Activated CD4-positive, alpha-beta T cell treated with anti-CD3 and anti-CD28 coated beads for 36 hours (primary cell): ENCODE measurements at regions of chr14 and their contacts with region 1.

Region 1: GRCh38 chr14:105490572-105491366 is at the start of gene TEDC1:
- DNase-seq: peak; percentile 100
- ATAC-seq: peak; percentile 80
- H3K4me3 Mint-ChIP-seq: peak within 1 kb of the TSS; percentile 81
- H3K27ac Mint-ChIP-seq: peak within 1 kb of the TSS; percentile 86
- H3K4me1 Mint-ChIP-seq: peaks cover 22% of the 10 kb centered on the region
- H3K27me3 Mint-ChIP-seq: no peaks in the 10 kb centered on the region
- total RNA-seq, gene TEDC1: 21.7 to 31.8 TPM

Region 2: DNA sequence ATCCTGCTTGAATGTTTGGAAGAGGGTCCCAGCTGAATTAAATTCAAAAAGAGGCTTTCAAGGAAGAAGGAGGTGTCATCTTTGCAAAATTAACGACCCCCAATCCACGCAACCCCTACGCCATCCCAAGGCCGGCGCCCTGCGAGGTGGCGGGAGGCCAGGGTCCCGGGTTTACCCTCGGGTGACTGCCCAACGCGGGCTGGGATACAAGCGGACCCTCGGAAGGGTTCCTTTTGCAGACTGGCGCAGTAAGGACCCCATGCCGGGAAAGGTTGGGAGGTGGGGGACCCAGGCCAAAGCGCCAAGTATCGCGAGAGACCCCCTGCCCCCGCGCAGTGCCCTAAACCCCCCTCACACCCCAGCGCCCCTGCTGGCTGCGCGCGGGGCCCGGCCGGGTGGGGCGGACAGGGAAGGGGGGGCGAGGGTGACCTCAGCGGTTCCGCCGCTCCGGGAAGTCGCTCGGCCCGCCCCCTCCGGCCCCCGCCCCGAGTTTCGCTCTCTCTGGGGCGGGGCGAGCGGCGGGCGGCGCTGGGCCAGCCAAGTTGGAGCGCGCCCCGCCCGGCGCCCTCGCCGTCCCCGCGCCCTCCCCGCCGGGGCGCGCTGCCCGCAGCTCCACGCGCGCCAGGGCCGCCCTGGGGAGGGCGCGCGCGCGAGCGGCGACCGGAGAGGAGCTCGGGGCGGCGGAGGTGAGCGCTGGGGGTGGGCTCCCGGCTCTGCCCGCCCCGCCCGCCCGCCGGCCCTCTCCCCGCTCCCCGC is 690.6 kb before region 1 on chr14:
- CTCF ChIA-PET with region 1: no interaction called
- POLR2A ChIA-PET with region 1: no interaction called
- intact Hi-C with region 1: loop called in 1 of 2 experiments (anchors 2 kb)
- DNase-seq: peak; percentile 88
- ATAC-seq: peak; percentile 77
- H3K4me3 Mint-ChIP-seq: peak overlapping the region; percentile 49
- H3K27ac Mint-ChIP-seq: no peak overlapping the region
- H3K4me1 Mint-ChIP-seq: peaks cover 22% of the 10 kb centered on the region
- H3K27me3 Mint-ChIP-seq: no peaks in the 10 kb centered on the region

Region 3: DNA sequence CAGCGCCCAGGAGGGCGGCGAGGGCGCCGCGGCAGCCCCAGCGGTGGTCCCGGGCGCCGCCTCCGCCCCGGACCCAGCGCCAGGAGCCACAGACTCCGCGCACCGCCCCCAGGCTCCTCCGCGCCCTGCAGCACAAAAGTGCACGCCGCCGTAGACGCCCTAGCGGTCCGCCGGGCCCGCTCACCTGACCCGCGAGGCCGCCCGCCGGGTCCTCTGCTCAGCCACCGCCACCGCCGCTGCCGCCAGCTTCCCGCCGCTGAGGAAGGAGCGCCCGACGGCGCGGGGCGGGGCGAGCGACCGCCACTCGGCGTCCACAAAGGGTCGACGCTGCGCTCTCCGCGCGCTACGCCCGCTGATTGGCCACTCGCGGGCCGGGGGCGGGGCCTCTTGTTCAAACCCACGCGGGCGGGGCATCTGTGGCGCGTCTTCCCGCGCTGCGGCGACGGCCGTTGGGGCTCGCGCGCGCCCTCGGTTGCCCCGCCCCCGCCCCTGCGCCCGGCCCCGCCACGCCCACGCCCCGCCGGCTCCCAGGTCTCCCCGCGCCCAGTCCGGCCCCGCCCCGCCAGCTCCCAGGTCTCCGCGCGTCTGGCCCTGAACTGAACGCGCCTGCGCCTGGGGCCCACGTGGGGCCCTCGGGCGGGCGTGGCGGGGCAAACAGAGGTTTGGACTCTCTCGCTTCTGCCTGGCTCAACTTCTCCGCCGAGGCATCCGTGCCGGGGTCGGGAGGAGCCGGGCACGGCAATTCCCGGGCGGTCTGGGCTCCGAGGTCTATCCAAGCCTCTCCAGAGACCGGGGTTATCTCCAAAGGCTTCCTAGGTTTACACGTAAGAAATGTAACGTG is 469.7 kb before region 1 on chr14 and contains the start of gene CDCA4:
- CTCF ChIA-PET with region 1: no interaction called
- POLR2A ChIA-PET with region 1: no interaction called
- intact Hi-C with region 1: loop called (anchors 1 kb)
- DNase-seq: peak; percentile 99
- ATAC-seq: peak; percentile 82
- H3K4me3 Mint-ChIP-seq: peak within 1 kb of the TSS; percentile 94
- H3K27ac Mint-ChIP-seq: peak within 1 kb of the TSS; percentile 93
- H3K4me1 Mint-ChIP-seq: peaks cover 72% of the 10 kb centered on the region
- H3K27me3 Mint-ChIP-seq: no peaks in the 10 kb centered on the region
- total RNA-seq, gene CDCA4: 52.0 to 62.7 TPM

Region 4: DNA sequence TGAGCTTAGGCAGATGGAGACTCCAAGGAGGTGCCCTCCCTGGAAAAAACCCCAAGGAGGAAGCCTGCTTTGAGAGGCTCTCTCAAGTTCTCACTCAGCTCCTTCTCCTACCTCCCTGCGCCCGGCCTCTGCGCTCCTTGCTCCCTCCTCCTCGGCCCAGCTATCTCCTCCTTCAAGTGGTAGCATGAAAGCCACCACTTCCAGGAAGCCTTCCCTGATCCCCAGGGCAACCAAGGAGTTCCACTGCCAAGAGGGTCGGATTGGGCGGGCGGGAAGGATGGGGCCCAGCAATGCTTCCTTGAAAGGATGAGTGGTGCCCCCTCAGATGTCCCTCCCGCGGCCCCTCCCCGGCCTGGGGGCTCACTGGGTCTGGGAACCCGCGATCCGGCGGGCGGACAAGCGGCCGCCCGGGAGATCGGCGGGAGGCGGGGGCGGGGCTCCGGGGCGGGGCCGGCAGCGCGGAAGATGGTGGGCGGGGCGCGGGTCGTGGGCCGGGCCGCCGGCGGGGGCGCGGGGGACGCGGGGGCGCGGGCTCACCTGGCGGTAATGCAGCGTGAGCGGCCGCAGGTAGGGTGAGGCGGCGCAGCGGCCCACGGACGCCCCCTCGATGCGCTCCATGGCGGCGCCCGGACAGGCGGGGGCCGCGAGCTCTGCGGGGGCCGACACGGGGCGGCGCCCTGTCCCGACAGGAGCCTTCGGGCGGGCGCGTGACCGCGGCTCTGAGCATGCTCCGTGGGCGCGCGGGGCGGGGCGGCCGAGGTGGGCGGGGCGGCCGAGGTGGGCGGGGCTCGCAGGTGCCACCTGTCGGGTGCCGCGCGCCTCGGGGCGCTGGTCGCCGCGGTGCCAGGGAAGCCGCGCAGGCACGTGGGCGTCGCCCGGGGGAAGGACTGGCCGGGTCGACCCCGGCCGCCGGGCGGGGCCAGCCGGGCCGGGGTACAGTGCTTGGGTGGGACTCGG is 309.9 kb before region 1 on chr14 and contains the start of gene NUDT14:
- CTCF ChIA-PET with region 1: no interaction called
- POLR2A ChIA-PET with region 1: no interaction called
- intact Hi-C with region 1: loop called in 1 of 2 experiments (anchors 1 kb)
- DNase-seq: peak; percentile 93
- ATAC-seq: peak; percentile 90
- H3K4me3 Mint-ChIP-seq: peak within 1 kb of the TSS; percentile 69
- H3K27ac Mint-ChIP-seq: no peak within 1 kb of the TSS
- H3K4me1 Mint-ChIP-seq: peaks cover 10% of the 10 kb centered on the region
- H3K27me3 Mint-ChIP-seq: no peaks in the 10 kb centered on the region
- total RNA-seq, gene NUDT14: 12.3 to 13.5 TPM

Region 5: GRCh38 chr14:105368965-105369652 is 121.7 kb before region 1 on chr14:
- CTCF ChIA-PET with region 1: interaction called, 74 read pairs
- POLR2A ChIA-PET with region 1: interaction called, 8 read pairs
- intact Hi-C with region 1: loop called (anchors 1 kb)
- DNase-seq: no peak
- ATAC-seq: no peak
- H3K4me3 Mint-ChIP-seq: no peak overlapping the region
- H3K27ac Mint-ChIP-seq: no peak overlapping the region
- H3K4me1 Mint-ChIP-seq: peaks cover 4% of the 10 kb centered on the region
- H3K27me3 Mint-ChIP-seq: no peaks in the 10 kb centered on the region

Region 6: DNA sequence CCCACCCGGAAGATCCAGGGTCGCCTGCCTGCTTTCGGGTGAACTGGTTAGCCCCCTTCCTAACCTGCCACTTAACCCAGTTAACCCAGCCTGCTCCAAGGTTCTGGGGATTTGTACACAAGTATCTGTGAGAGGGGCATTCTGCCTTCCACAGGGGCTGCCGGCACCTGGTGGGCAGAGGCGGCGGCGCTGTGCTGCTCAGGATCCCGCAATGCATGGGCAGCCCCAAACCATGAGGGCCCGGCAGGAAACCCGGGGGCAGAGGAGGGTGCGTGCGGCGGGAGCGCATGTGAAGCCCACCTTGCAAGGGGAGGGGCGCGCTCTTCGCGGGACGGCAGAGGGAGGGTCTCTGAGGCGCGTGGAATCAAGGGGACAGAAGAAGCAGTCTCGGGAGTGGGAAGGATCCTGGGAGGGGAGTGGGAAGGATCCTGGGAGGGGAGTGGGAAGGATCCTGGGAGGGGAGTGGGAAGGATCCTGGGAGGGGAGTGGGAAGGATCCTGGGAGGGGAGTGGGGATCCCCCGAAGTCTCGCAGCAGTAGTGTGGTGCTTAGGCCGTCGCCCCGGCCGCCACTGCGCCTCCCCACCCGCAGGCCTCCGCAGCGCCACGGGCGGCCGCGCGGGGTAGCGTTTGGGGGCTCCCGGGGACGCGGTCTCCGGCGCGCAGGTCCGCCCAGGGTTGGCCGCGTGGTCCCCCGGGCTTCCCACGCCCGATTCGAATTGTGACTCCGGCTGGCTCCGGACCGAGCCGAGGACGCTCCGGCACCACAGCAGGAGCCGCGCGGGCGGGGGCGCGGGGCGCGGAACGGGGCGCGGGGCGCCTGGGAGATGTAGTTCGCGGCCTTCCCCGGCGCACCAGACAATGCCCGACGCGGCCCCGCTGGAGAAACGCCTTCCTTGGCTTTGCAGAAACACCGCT is 76.1 kb before region 1 on chr14:
- CTCF ChIA-PET with region 1: interaction called, 10 read pairs
- POLR2A ChIA-PET with region 1: no interaction called
- intact Hi-C with region 1: loop called in 1 of 2 experiments (anchors 1 kb)
- DNase-seq: peak; percentile 81
- ATAC-seq: peak; percentile 85
- H3K4me3 Mint-ChIP-seq: peak overlapping the region; percentile 61
- H3K27ac Mint-ChIP-seq: no peak overlapping the region
- H3K4me1 Mint-ChIP-seq: peaks cover 11% of the 10 kb centered on the region
- H3K27me3 Mint-ChIP-seq: peaks cover 17% of the 10 kb centered on the region

Region 7: GRCh38 chr14:105527661-105528581 is 37.2 kb after region 1 on chr14:
- CTCF ChIA-PET with region 1: interaction called, 10 read pairs
- POLR2A ChIA-PET with region 1: interaction called, 5 read pairs
- intact Hi-C with region 1: loop called (anchors 1 to 2 kb)
- DNase-seq: peak; percentile 90
- ATAC-seq: peak; percentile 62
- H3K4me3 Mint-ChIP-seq: peak overlapping the region; percentile 74
- H3K27ac Mint-ChIP-seq: peak overlapping the region; percentile 58
- H3K4me1 Mint-ChIP-seq: peaks cover 15% of the 10 kb centered on the region
- H3K27me3 Mint-ChIP-seq: peaks cover 10% of the 10 kb centered on the region